ENCODE measurements at regions of chr17 and their contacts with region 1.

Region 1: DNA sequence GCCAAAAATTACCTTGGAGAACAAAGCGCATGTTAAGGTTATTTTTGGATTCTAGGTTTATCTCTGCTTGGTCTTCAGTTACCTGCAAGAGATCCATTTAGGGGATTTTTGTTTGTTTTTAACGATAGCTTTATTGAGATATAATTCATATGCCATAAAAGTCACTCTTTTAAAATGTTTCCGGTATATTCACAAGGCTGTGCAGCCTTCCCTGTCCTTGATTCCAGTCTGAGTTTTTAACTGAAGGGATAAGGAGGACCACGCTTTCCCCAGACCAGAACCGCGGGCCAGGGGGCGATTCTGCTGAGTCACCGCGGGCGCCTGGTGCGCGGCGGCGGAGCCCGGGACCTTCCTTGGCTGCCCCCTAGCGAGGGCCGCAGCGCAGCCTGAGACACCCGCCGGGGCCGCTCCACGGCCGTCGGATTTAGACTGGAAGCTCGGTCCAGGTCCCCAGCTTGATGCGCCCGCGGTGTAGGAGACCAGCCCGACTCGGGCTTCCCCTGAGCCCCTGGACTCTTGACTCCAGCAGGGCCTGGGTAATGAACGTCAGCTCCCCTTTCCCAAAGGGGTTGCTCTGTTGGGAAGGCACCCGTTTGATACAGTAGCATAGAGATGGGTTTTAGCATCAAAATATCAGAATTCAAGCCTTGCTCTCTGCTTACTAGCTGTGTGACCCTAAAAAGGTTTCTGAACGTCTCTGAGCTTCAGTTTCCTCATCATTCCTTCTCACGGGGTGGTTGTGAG is 50.0 kb upstream of the STH start:
- DNase-seq: peak; percentile 43
- ATAC-seq: peak; percentile 96
- H3K4me3 ChIP-seq: peak overlapping the region; percentile 32 to 53
- H3K27ac ChIP-seq: peak overlapping the region; percentile 59
- H3K4me1 ChIP-seq: peaks cover 25 to 49% of the 10 kb centered on the region in 2 experiments
- H3K27me3 ChIP-seq: no peaks in the 10 kb centered on the region
- CTCF ChIP-seq: peak; percentile 65 to 96 (median 89); a peak in 5 of 6 replicates
- POLR2A ChIP-seq: no peak
- RAD21 ChIP-seq: peak; percentile 73

Region 2: GRCh38 chr17:45894022-45894784 is 54.9 kb before region 1 on chr17 and contains the start of gene MAPT:
- CTCF ChIA-PET with region 1: interaction called, 11 read pairs
- POLR2A ChIA-PET with region 1: interaction called, 3 read pairs
- RAD21 ChIA-PET with region 1: no interaction called
- intact Hi-C with region 1: no loop called
- DNase-seq: peak; percentile 93
- ATAC-seq: peak; percentile 94
- H3K4me3 ChIP-seq: peak within 1 kb of the TSS; percentile 82 to 93
- H3K27ac ChIP-seq: peak within 1 kb of the TSS; percentile 60; the same call in 1 of the 2 replicates
- H3K4me1 ChIP-seq: peaks cover 3 to 20% of the 10 kb centered on the region in 2 experiments; a peak in 2 of 4 replicates
- H3K27me3 ChIP-seq: no peaks in the 10 kb centered on the region
- CTCF ChIP-seq: peak; percentile 55 to 96 (median 85); a peak in 5 of 6 replicates
- POLR2A ChIP-seq: peak; percentile 92
- RAD21 ChIP-seq: no peak; the same call in 1 of the 2 replicates
- total RNA-seq, gene MAPT: 37.5 TPM

Region 3: GRCh38 chr17:45961206-45961605 is 12.2 kb after region 1 on chr17:
- CTCF ChIA-PET with region 1: interaction called, 12 read pairs
- POLR2A ChIA-PET with region 1: no interaction called
- RAD21 ChIA-PET with region 1: no interaction called
- intact Hi-C with region 1: no loop called
- DNase-seq: no peak
- ATAC-seq: no peak
- H3K4me3 ChIP-seq: no peak overlapping the region
- H3K27ac ChIP-seq: no peak overlapping the region
- H3K4me1 ChIP-seq: peaks cover 0 to 7% of the 10 kb centered on the region in 2 experiments; a peak in 1 of 4 replicates
- H3K27me3 ChIP-seq: no peaks in the 10 kb centered on the region
- CTCF ChIP-seq: no peak
- POLR2A ChIP-seq: no peak
- RAD21 ChIP-seq: no peak